ENCODE measurements at regions of chr5 and their contacts with region 1.

Region 1: DNA sequence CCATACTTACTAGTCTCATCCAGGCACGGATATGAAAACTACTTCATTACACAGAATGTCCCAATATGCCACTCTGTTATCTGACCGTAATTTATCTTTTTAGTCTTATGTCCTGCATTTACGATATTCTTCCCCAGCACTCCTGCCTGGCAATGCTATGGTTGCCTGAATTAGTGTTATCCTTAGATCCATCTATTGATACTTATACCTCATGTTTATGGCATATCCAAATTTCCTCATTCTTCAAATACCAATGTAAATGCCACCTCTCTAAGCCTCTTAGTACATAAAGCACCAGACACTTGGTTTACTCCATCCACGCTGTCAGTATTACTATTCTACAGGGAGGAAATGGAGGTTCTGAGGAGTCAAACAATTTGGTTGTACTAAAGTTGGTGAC is 507.8 kb upstream of the NMUR2 start:
- DNase-seq: no peak

Region 2: GRCh38 chr5:152178350-152178699 is 734.6 kb before region 1 on chr5:
- intact Hi-C with region 1: loop called in 1 of 2 experiments (anchors 5 kb)
- DNase-seq: no peak